MCF 10A (cell line): ENCODE measurements at regions of chr1 and their contacts with region 1.

Region 1: GRCh38 chr1:91511386-91511785 is 10.7 kb downstream of the CDC7 start:
- DNase-seq: peak; percentile 59
- H3K4me3 Mint-ChIP-seq: no peak overlapping the region
- H3K27ac Mint-ChIP-seq: no peak overlapping the region
- H3K4me1 Mint-ChIP-seq: peaks cover 15% of the 10 kb centered on the region
- H3K27me3 Mint-ChIP-seq: no peaks in the 10 kb centered on the region
- CTCF ChIP-seq: peak; percentile 62

Region 2: DNA sequence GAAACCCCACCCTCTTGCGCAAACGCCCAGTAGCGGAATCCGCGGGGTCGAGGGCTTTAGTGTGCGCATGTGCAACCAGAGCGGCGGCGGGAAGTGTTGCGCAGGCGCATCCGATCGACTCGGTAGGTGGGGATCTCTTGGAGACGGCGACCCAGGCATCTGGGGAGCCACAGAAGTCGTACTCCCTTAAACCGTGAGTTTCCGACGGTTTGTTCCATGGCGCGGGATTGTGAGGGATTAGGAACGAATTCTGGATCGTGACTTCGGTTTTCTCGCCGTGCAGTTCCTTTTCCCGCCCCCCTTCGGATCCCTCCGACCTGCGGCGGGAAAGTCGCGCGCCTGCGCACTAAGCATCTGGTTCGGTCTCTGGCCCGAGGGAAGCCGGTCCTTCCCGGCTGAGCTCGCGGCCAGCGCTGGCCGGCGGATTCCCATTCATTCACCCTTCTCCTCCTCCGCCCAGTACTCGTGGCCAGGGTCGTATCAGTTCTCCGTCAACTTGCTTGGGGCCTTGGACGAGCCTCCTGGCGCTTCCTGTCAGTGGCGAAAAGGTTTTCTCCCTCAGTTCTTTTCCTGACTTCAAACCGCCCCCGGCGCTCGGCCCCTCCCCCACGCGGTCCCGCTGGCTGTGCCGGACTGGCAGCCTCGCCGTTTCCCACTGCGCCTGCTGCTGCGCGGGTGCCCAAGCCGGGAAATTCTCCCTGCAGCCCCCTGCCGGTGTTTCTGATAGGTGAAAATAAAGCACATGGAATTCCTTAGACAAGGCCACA is 10.4 kb before region 1 on chr1 and contains the start of gene CDC7:
- CTCF ChIA-PET with region 1: interaction called, 26 read pairs
- POLR2A ChIA-PET with region 1: interaction called, 3 read pairs
- intact Hi-C with region 1: no loop called
- DNase-seq: peak; percentile 89
- H3K4me3 Mint-ChIP-seq: no peak within 1 kb of the TSS
- H3K27ac Mint-ChIP-seq: no peak within 1 kb of the TSS
- H3K4me1 Mint-ChIP-seq: peaks cover 17% of the 10 kb centered on the region
- H3K27me3 Mint-ChIP-seq: no peaks in the 10 kb centered on the region
- CTCF ChIP-seq: peak; percentile 38
- total RNA-seq, gene CDC7: 4.0 and 8.0 TPM in 2 replicates

Region 3: DNA sequence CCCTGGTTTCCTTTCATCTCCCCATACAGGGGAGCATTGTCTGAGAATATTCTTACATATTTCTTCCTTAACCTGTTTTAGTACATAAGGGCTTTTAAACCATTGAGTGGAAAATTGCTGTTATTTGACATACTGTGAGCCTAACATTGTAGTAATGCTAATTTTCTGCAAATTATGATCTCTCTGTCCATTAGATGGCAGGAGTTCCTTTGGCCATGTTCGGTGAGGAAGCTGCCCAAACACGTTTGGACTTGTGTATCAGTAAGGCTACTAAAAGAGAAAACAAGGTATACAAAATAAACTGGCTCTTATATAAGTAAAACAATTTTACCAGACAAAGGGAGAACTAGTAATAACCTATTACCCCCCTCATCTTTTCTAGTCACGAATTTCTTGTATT is 18.5 kb after region 1 on chr1:
- CTCF ChIA-PET with region 1: interaction called, 24 read pairs
- POLR2A ChIA-PET with region 1: interaction called, 8 read pairs
- intact Hi-C with region 1: no loop called
- DNase-seq: peak; percentile 67
- H3K4me3 Mint-ChIP-seq: no peak overlapping the region
- H3K27ac Mint-ChIP-seq: peak overlapping the region; percentile 70
- H3K4me1 Mint-ChIP-seq: peaks cover 14% of the 10 kb centered on the region
- H3K27me3 Mint-ChIP-seq: no peaks in the 10 kb centered on the region
- CTCF ChIP-seq: peak; percentile 60

Region 4: GRCh38 chr1:91924146-91924545 is 412.8 kb after region 1 on chr1:
- CTCF ChIA-PET with region 1: interaction called, 163 read pairs
- POLR2A ChIA-PET with region 1: interaction called, 6 read pairs
- intact Hi-C with region 1: loop called (anchors 1 kb)
- DNase-seq: peak; percentile 67
- H3K4me3 Mint-ChIP-seq: no peak overlapping the region
- H3K27ac Mint-ChIP-seq: peak overlapping the region; percentile 87
- H3K4me1 Mint-ChIP-seq: peaks cover 17% of the 10 kb centered on the region
- H3K27me3 Mint-ChIP-seq: no peaks in the 10 kb centered on the region
- CTCF ChIP-seq: no peak

Region 5: DNA sequence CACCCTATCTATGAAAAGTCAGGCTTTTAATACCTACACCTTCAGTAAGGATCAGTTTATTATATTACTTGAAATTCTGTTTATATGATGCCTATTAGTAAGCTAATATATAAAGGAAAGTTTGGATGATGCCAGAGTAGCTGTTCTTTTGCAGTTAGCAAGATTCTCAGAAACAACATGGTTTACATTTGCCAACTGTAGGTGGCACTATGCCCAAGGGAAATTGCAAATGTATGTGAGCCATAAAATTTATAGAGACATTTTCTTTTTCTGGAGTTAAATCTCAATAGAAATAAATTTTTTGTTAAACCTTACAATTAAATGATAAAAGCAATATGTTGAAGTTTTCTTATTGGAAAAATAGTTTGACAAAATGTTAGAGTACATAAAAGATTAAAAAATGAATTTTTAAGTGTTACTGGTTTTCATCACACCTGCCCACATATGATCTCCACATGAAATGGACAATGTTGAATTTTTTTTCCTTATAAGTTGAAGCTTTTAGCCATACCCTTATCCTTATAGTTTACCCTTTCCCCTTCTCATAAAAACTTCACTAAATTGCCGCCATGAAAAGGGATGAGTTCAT is 486.3 kb after region 1 on chr1:
- CTCF ChIA-PET with region 1: interaction called, 18 read pairs
- POLR2A ChIA-PET with region 1: no interaction called
- intact Hi-C with region 1: no loop called
- DNase-seq: peak; percentile 75
- H3K4me3 Mint-ChIP-seq: no peak overlapping the region
- H3K27ac Mint-ChIP-seq: no peak overlapping the region
- H3K4me1 Mint-ChIP-seq: no peaks in the 10 kb centered on the region
- H3K27me3 Mint-ChIP-seq: no peaks in the 10 kb centered on the region
- CTCF ChIP-seq: peak; percentile 55

Region 6: GRCh38 chr1:92291372-92291999 is 780.1 kb after region 1 on chr1:
- CTCF ChIA-PET with region 1: interaction called, 24 read pairs
- POLR2A ChIA-PET with region 1: no interaction called
- intact Hi-C with region 1: loop called (anchors 2 kb)
- DNase-seq: peak; percentile 63
- H3K4me3 Mint-ChIP-seq: no peak overlapping the region
- H3K27ac Mint-ChIP-seq: no peak overlapping the region
- H3K4me1 Mint-ChIP-seq: peaks cover 6% of the 10 kb centered on the region
- H3K27me3 Mint-ChIP-seq: no peaks in the 10 kb centered on the region
- CTCF ChIP-seq: peak; percentile 67

Region 7: DNA sequence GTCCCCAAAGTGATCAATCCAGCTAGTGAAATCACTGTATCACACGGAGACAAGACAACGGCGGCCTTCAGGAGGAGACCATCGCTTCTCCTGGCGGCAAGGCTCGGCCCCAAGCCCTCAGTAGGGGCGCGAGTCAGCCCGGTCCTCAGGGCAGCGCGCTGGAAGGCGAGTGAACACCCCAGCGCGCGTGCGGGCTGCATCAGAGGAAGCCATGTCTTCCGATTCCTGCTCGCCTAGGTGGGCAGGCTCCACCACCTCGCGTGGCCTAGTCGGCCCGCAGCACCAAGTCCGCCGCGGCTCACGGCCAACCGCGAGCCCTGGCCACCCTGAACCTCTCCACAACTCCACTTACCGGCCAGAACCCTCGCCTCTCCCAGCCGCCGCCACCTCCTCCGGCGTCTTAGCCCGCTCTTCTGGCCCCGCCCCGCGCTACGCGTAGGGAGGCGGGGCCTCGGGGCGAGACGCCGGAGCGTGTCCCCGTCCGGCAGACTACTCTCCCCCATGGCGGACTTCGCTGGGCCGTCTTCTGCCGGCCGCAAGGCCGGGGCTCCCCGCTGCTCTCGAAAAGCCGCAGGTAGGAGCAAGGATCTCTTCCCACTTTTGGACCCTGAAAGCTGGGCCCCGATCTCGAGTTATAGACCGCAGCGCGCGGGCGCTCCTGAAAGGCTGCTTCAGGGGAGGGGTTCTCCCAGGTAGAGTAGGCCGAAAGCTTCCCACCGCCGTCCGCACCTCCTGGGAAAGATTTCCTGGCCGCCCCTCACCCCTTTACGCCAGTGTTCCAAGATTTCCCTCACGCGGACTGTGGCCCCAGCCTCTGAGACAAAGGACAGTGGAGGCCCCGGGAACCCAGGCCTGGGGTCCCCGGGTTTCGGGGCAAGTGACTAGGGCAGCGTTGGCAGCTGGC is 787.4 kb after region 1 on chr1 and contains the starts of genes GLMN and RPAP2:
- CTCF ChIA-PET with region 1: interaction called, 6 read pairs
- POLR2A ChIA-PET with region 1: no interaction called
- intact Hi-C with region 1: loop called (anchors 2 kb)
- DNase-seq: peak; percentile 89
- H3K4me3 Mint-ChIP-seq: peak within 1 kb of the TSS; percentile 97
- H3K27ac Mint-ChIP-seq: peak within 1 kb of the TSS; percentile 96
- H3K4me1 Mint-ChIP-seq: peaks cover 10% of the 10 kb centered on the region
- H3K27me3 Mint-ChIP-seq: no peaks in the 10 kb centered on the region
- CTCF ChIP-seq: peak; percentile 3
- total RNA-seq, gene GLMN: 8.6 and 10.1 TPM in 2 replicates
- total RNA-seq, gene RPAP2: 26.2 and 29.3 TPM in 2 replicates